WTC11 (cell line): ENCODE measurements at regions of chr11 and their contacts with region 1.

Region 1: GRCh38 chr11:44621140-44621681 is 55.7 kb downstream of the CD82 start:
- DNase-seq: peak; percentile 91
- ATAC-seq: peak; percentile 75
- H3K4me3 Mint-ChIP-seq: peak overlapping the region; percentile 65
- H3K27ac Mint-ChIP-seq: no peak overlapping the region
- H3K4me1 Mint-ChIP-seq: peaks cover 35% of the 10 kb centered on the region; the same call in 1 of the 2 replicates
- H3K27me3 Mint-ChIP-seq: peaks cover 16% of the 10 kb centered on the region
- CTCF ChIP-seq: peak; percentile 99

Region 2: GRCh38 chr11:44556735-44557409 is 64.3 kb before region 1 on chr11:
- CTCF ChIA-PET with region 1: interaction called, 250 read pairs
- POLR2A ChIA-PET with region 1: interaction called, 4 read pairs
- DNase-seq: peak; percentile 67
- ATAC-seq: peak; percentile 32
- H3K4me3 Mint-ChIP-seq: no peak overlapping the region
- H3K27ac Mint-ChIP-seq: no peak overlapping the region; the same call in 1 of the 2 replicates
- H3K4me1 Mint-ChIP-seq: peaks cover 31% of the 10 kb centered on the region
- H3K27me3 Mint-ChIP-seq: peaks cover 8% of the 10 kb centered on the region
- CTCF ChIP-seq: peak; percentile 53

Region 3: DNA sequence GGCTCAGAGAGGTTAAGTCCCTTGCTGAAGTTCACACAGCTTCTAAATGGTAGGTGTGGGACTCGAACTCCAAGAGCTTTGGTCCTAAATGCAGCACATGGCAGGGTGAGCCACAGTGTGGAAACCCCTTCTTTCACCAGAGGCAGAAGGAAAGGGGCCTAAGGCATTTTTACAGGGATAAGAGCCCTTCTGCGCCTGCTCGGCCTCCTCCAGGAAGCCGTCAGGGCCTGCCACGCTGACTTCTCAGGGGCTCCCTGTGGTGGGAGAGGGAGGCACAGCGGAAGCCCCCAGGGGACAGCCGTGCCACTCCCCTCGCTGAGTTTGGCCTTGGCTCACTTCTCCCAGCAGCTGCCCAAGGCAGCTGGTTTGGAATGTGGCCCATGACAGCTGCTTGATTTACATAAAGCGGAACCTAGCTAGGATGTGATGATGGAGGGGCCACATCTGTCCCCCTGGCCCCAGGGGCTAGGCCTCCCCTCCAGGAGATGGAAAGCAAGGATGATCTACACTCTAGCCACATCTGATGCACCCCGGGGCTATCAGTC is 20.3 kb before region 1 on chr11:
- CTCF ChIA-PET with region 1: interaction called, 13 read pairs
- POLR2A ChIA-PET with region 1: no interaction called
- DNase-seq: no peak
- ATAC-seq: peak; percentile 12; the same call in 1 of the 2 replicates
- H3K4me3 Mint-ChIP-seq: no peak overlapping the region
- H3K27ac Mint-ChIP-seq: no peak overlapping the region
- H3K4me1 Mint-ChIP-seq: peaks cover 30% of the 10 kb centered on the region
- H3K27me3 Mint-ChIP-seq: no peaks in the 10 kb centered on the region
- CTCF ChIP-seq: no peak

Region 4: DNA sequence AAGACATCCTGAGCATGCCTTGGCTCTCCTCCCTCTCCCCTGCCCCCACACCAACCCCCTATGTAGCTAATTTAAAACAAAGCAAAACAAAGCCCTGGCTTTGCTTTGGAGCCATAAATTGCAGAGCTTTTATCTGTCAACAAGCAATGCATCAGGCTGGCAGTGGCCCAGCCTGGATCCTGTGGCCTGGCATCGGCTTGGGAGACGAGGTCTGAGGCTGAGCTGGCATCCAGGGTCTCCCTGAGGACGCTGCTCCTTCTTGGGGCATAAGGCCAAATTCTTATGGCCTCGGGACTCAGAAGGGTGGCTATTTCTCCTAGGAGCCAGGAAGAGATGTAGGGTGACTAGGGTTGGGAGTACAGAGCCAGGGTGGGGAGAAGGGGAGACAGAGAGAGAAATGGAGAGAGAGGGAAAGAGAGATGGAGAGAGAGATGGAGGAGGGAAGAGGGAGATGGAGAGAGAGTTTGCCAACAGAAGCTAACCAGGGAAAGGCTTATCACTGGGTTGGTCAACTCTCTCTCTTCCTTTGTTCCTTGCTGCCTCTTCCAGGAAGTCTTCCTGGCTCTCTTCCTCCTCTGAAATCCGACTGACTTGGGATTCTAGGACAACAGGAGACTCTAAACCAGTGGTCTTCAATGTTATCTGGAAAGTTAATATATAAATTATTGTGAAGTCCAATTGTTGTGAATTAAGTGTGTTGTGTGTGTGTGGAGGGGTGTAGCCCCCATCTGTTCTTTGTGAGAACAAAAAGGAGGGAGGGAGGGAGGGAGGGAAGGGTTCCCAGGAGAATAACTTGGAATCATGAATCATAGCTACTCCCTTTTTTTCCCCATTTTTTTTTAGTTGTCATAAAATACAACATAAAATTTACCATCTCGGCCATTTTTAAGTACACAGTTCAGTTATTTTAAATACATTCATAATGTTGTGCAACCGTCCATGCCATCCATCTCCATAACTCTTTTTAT is 134.6 kb after region 1 on chr11:
- CTCF ChIA-PET with region 1: interaction called, 22 read pairs
- POLR2A ChIA-PET with region 1: no interaction called
- DNase-seq: no peak
- ATAC-seq: no peak
- H3K4me3 Mint-ChIP-seq: no peak overlapping the region
- H3K27ac Mint-ChIP-seq: no peak overlapping the region
- H3K4me1 Mint-ChIP-seq: peaks cover 66% of the 10 kb centered on the region
- H3K27me3 Mint-ChIP-seq: peaks cover 56% of the 10 kb centered on the region
- CTCF ChIP-seq: no peak

Region 5: DNA sequence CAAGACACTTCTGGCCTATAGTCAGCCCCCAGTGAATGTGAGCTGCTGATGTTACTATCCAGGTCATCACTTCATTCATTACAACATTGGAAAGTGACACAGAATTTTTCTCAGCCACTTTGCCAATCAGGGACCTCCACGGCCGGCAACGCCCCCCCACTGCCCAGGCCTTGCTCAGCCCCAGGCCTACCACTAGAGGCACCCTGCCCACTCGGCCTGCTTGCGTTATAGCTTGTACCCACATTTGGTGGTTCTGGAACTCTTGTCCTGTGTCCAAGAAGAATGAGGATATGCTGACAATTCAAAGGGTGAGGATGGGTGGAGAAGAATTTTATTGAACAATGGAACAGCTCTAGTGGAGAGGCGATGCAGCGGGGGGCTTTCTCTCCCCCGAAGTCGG is 201.8 kb after region 1 on chr11:
- CTCF ChIA-PET with region 1: interaction called, 13 read pairs
- POLR2A ChIA-PET with region 1: no interaction called
- DNase-seq: peak; percentile 51
- ATAC-seq: peak; percentile 18
- H3K4me3 Mint-ChIP-seq: no peak overlapping the region
- H3K27ac Mint-ChIP-seq: no peak overlapping the region
- H3K4me1 Mint-ChIP-seq: peaks cover 41% of the 10 kb centered on the region
- H3K27me3 Mint-ChIP-seq: peaks cover 23% of the 10 kb centered on the region
- CTCF ChIP-seq: no peak